OCI-LY7 (cell line): ENCODE measurements at regions of chr12 and their contacts with region 1.

Region 1: DNA sequence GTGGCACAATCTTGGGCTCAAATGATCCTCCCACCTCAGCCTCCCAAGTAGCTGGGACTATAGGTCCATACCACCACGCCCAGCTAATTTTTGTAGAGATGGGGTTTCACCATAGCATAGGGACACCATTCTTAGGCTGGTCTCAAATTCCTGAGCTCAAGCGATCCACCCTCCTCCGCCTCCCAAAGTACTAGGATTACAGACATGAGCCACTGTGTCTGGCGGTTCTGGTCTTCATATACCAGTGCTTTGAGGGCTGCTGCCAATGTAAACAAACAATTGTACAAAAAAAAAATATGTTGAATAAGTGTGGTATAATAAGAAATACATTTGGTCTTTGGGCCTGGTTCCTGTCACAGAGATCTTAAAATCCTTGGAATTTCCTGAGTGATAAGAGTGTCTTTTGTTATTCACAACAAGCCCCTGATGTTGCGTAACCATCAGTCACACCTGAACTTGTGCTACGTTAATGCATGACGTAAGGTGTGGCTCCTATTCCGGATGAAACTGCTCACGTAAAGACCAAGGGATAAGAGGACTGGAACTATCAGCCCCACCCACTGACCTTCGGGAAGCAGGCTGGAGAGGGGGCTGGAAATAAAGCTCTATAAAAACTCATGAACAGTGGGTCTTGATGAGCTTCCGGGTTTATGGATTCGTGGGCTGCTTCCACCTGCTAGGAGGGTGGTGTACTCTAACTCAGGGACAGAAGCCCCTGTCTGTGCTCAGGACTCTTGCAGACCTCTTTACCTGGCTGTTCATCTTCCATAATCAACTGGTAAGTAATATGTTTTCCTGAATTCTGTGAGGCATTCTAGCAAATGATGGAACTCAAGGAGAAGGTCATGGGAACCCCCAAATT is 16.5 kb upstream of the RIMKLB start:
- DNase-seq: no peak
- H3K4me3 ChIP-seq: no peak overlapping the region
- H3K27ac ChIP-seq: no peak overlapping the region
- H3K4me1 ChIP-seq: peaks cover 18% of the 10 kb centered on the region
- CTCF ChIP-seq: no peak

Region 2: DNA sequence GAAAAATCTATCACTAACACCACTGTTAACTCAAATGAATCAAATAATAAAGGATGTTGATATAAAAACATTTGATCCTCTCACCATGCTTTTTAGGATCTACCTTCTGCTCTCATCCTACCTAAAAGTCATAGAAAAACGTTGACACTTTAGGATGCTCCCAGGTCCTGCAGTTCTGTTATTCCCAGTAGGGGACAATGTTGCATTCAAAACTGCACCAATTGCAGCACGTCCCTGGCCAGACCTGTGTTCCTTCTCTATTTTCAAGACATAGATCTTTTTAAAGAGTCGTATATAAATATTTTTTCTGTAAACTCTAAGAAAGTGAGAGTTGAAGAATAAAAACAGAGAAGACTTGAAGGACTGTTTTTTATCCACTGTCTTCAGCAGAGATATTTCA is 77.4 kb before region 1 on chr12:
- CTCF ChIA-PET with region 1: no interaction called
- POLR2A ChIA-PET with region 1: interaction called, 3 read pairs
- intact Hi-C with region 1: loop called (anchors 2 kb)
- DNase-seq: no peak
- H3K4me3 ChIP-seq: no peak overlapping the region
- H3K27ac ChIP-seq: no peak overlapping the region
- H3K4me1 ChIP-seq: peaks cover 16% of the 10 kb centered on the region
- CTCF ChIP-seq: peak; percentile 63

Region 3: GRCh38 chr12:8823565-8824300 is 142.5 kb after region 1 on chr12:
- CTCF ChIA-PET with region 1: no interaction called
- POLR2A ChIA-PET with region 1: interaction called, 4 read pairs
- intact Hi-C with region 1: loop called (anchors 1 kb)
- DNase-seq: peak; percentile 66
- H3K4me3 ChIP-seq: no peak overlapping the region
- H3K27ac ChIP-seq: no peak overlapping the region
- H3K4me1 ChIP-seq: peaks cover 14% of the 10 kb centered on the region
- CTCF ChIP-seq: peak; percentile 94

Region 4: DNA sequence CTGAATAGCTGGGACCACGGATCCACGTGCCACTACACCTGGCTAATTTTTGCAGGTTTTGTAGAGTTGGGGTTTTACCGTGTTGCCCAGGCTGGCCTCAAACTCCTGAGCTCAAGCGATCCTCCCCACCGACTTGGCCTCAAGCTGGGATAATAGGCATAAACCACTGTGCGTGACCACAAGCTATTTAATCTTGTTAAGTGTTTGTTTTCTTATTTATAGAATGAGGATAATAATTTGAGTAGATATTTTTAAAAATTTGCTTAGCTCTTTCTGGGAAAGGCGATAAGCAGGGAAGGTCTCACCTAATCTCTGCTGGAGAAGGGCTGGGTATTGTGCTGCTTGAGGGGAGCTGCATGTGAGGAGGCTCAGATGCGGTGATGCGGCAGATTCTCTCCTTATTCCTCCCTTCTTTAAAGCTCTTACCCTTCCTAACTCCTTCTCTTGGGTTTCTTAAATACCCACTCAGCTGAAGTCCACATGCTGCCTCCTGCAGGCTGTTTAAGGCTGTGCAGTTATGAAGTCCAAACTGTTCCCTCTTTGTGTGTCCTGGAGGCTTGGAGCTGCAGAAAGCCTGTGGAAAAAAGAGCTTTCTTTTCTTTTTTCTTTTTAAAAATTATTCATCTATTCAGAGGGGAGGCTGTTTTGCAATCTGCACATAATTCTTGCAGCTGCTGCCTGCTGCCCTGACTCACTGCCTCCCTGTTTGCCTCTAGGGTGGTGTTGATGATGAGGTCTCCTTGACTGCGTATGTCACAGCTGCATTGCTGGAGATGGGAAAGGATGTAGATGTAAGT is 179.1 kb after region 1 on chr12:
- CTCF ChIA-PET with region 1: interaction called, 4 read pairs
- POLR2A ChIA-PET with region 1: interaction called, 4 read pairs
- intact Hi-C with region 1: loop called (anchors 1 kb)
- DNase-seq: peak; percentile 62
- H3K4me3 ChIP-seq: no peak overlapping the region
- H3K27ac ChIP-seq: no peak overlapping the region
- H3K4me1 ChIP-seq: no peaks in the 10 kb centered on the region
- CTCF ChIP-seq: peak; percentile 87

Region 5: DNA sequence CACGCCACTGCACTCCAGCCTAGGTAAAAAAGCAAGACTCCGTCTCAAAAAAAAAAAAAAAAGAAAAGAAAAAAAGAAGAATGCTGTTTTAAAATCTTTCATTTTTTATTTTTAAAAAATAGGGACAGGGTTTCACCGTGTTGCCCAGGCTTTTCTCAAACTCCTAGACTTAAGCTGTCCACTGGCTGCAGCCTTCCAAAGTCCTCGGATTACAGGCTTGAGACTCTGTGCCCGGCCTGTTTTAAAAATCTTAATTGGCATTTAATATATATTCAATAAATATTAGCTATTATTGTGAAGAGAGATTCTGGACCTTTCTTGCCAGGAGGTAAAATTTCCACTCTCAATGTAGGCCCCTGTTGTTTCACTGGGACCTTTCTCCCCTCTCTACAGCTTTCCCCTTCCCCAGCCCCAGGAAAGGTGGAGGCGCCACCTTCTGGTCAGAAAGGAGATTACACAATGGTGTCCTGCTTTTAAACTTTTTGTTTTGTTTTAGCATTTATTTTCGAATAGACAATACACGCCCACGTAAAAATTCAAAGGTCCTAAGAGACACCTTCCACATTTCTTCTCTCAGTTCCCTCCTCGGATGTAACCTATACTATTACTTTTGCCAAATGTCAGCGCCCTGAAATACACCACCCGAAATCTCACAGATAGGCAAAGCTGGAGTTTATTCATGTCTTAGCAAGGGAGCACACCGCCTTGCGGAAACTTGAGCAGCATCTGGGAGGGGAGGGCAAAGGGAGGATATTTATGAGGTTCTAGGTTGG is 209.2 kb after region 1 on chr12:
- CTCF ChIA-PET with region 1: no interaction called
- POLR2A ChIA-PET with region 1: interaction called, 3 read pairs
- intact Hi-C with region 1: loop called (anchors 1 kb)
- DNase-seq: peak; percentile 64
- H3K4me3 ChIP-seq: peak overlapping the region; percentile 63
- H3K27ac ChIP-seq: no peak overlapping the region
- H3K4me1 ChIP-seq: no peaks in the 10 kb centered on the region
- CTCF ChIP-seq: peak; percentile 99

Region 6: DNA sequence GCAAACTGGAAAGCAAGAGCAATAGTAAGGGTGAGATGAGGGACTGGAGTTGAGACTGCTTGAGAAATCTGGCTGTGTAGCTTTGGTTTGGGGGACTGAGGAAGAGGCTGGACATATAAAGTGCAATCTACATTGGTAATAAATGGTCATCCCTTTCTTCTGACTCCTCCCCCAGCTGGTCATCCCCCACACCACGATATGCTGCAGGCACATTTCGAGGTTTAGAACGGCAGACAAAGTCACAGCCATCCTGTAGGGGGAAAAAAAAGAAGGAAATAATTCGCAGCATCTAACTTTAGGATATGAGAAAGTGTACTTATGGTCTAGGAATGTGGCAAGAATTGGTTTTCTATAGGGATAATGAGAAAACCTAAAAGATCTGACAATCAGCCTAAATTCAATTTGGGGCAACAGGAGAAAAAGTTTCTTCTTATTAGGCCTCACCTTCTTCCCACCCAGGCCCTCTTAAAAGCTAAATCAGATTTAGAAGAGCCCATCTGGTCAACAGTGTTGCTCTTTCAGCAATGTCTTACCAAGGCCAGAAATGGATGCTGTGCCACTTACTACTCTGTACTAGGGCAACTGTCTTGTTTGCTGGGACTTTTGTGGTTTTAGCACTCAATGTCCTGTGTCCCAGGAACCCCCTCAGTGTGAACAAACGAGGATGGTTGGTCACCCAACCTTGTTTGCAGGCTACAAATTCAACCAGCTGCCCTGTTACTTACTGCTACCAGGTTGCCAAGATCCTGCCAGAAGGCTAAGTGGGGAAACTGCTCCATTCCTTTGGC is 260.6 kb after region 1 on chr12:
- CTCF ChIA-PET with region 1: no interaction called
- POLR2A ChIA-PET with region 1: no interaction called
- intact Hi-C with region 1: no loop called
- DNase-seq: no peak
- H3K4me3 ChIP-seq: no peak overlapping the region
- H3K27ac ChIP-seq: no peak overlapping the region
- H3K4me1 ChIP-seq: peaks cover 8% of the 10 kb centered on the region
- CTCF ChIP-seq: no peak

Region 7: GRCh38 chr12:9039397-9039977 is 358.2 kb after region 1 on chr12:
- CTCF ChIA-PET with region 1: no interaction called
- POLR2A ChIA-PET with region 1: no interaction called
- intact Hi-C with region 1: loop called (anchors 1 kb)
- DNase-seq: peak; percentile 68
- H3K4me3 ChIP-seq: no peak overlapping the region
- H3K27ac ChIP-seq: no peak overlapping the region
- H3K4me1 ChIP-seq: no peaks in the 10 kb centered on the region
- CTCF ChIP-seq: peak; percentile 96